Ovary (tissue), 10 donors: ENCODE measurements at regions of chr1 and their contacts with region 1.

Region 1: DNA sequence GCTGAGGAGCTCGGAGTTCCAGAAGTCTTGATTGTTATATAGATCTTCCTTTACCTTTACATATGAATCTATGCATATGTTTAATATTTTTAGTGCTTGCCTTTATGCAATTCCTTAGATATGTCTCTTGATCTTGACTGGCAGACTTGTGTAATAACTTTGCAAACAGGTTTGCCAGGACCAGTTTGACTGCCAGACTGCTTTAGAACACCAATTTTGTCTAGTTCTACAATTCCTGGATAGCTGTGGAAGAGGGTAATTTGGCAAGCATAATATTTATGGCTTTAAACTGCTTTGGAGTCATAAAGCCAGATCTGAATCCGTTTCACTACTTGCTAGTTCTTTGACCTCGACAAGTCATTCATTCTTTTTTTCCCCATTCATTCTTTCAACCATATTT is 250.0 kb downstream of the FAF1 start:
- DNase-seq: no peak
- H3K4me3 ChIP-seq: no peak overlapping the region
- H3K27ac ChIP-seq: no peak overlapping the region
- H3K4me1 ChIP-seq: peaks cover under 1% of the 10 kb centered on the region
- H3K27me3 ChIP-seq: no peaks in the 10 kb centered on the region
- CTCF ChIP-seq: no peak
- EP300 ChIP-seq: no peak
- POLR2A ChIP-seq: no peak

Region 2: DNA sequence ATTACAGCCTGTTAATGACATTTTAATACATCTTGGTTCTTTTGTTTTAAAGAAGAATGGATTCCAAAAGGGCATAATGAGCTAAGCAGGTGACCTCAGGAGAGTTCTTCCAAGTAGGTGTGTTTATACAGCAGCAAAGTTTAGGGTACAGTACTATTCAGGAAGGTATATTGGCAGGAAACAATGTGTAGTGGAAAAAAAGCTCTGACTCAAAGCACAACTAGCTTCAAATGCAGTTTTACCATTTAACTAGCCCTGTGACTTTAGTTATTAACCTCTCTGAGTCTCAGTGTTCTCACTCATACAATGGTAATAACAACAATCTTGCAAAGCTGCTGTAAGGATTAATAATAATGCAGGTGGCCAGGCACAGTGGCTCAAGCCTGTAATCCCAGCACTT is 220.1 kb after region 1 on chr1:
- intact Hi-C with region 1: loop called in 1 of 4 experiments (anchors 5 kb)
- DNase-seq: no peak
- H3K4me3 ChIP-seq: no peak overlapping the region
- H3K27ac ChIP-seq: no peak overlapping the region
- H3K4me1 ChIP-seq: no peaks in the 10 kb centered on the region
- H3K27me3 ChIP-seq: no peaks in the 10 kb centered on the region
- CTCF ChIP-seq: no peak
- EP300 ChIP-seq: no peak
- POLR2A ChIP-seq: no peak